CD4-positive, alpha-beta memory T cell (primary cell): ENCODE measurements at regions of chr11 and their contacts with region 1.

Region 1: DNA sequence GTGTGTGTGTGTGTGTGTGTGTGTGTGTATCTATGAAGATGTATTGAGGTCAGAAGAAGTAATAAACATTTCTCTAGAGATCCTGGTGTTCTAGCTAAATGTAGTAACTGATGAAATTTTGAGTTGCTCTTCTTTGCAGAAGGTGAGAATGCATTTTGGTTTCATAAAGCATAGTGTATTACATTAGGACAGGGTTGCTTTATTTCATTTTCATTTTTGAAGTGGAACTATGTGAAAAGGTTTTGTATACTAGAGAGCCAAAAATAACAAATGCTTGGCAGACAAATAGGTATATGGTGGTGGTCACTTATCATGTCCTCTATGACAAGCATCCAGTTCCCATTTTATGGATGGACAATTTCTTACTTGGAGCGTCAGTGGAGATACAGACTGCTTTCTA is 99.0 kb downstream of the CASP12 start:
- DNase-seq: peak in 3 of 5 donors; percentile 6 to 14 (median 9)
- H3K4me3 ChIP-seq: peak overlapping the region in 1 of 2 donors; percentile 16
- H3K4me3 Mint-ChIP-seq: peak overlapping the region; percentile 80 to 93 (median 84)
- H3K27ac ChIP-seq: no peak overlapping the region
- H3K27ac Mint-ChIP-seq: peak overlapping the region; percentile 71 to 92 (median 89)
- H3K4me1 ChIP-seq: peaks cover 29% of the 10 kb centered on the region
- H3K4me1 Mint-ChIP-seq: peaks cover 24 to 37% (median 33%) of the 10 kb centered on the region in 4 donors
- H3K27me3 ChIP-seq: no peaks in the 10 kb centered on the region
- H3K27me3 Mint-ChIP-seq: no peaks in the 10 kb centered on the region

Region 2: GRCh38 chr11:104678408-104678807 is 120.8 kb before region 1 on chr11:
- CTCF ChIA-PET with region 1: no interaction called
- POLR2A ChIA-PET with region 1: no interaction called
- intact Hi-C with region 1: no loop called
- DNase-seq: no peak
- H3K4me3 ChIP-seq: no peak overlapping the region
- H3K4me3 Mint-ChIP-seq: no peak overlapping the region
- H3K27ac ChIP-seq: no peak overlapping the region
- H3K27ac Mint-ChIP-seq: peak overlapping the region in 1 of 7 donors; percentile 15
- H3K4me1 ChIP-seq: no peaks in the 10 kb centered on the region
- H3K4me1 Mint-ChIP-seq: peaks cover 0 to 5% (median 4%) of the 10 kb centered on the region in 4 donors
- H3K27me3 ChIP-seq: no peaks in the 10 kb centered on the region
- H3K27me3 Mint-ChIP-seq: no peaks in the 10 kb centered on the region

Region 3: GRCh38 chr11:104817973-104818372 is 18.7 kb after region 1 on chr11:
- CTCF ChIA-PET with region 1: no interaction called
- POLR2A ChIA-PET with region 1: no interaction called
- intact Hi-C with region 1: loop called (anchors 2 kb)
- DNase-seq: no peak
- H3K4me3 ChIP-seq: no peak overlapping the region
- H3K4me3 Mint-ChIP-seq: no peak overlapping the region
- H3K27ac ChIP-seq: no peak overlapping the region
- H3K27ac Mint-ChIP-seq: no peak overlapping the region
- H3K4me1 ChIP-seq: no peaks in the 10 kb centered on the region
- H3K4me1 Mint-ChIP-seq: peaks cover 0 to 8% (median 3%) of the 10 kb centered on the region in 4 donors
- H3K27me3 ChIP-seq: no peaks in the 10 kb centered on the region
- H3K27me3 Mint-ChIP-seq: no peaks in the 10 kb centered on the region

Region 4: GRCh38 chr11:104830080-104830479 is 30.8 kb after region 1 on chr11:
- CTCF ChIA-PET with region 1: no interaction called
- POLR2A ChIA-PET with region 1: no interaction called
- intact Hi-C with region 1: no loop called
- DNase-seq: no peak
- H3K4me3 ChIP-seq: no peak overlapping the region
- H3K4me3 Mint-ChIP-seq: no peak overlapping the region
- H3K27ac ChIP-seq: no peak overlapping the region
- H3K27ac Mint-ChIP-seq: no peak overlapping the region
- H3K4me1 ChIP-seq: no peaks in the 10 kb centered on the region
- H3K4me1 Mint-ChIP-seq: peaks cover 0 to 3% (median 0%) of the 10 kb centered on the region in 4 donors
- H3K27me3 ChIP-seq: no peaks in the 10 kb centered on the region
- H3K27me3 Mint-ChIP-seq: no peaks in the 10 kb centered on the region

Region 5: GRCh38 chr11:104858882-104859775 is 59.9 kb after region 1 on chr11:
- CTCF ChIA-PET with region 1: no interaction called
- POLR2A ChIA-PET with region 1: no interaction called
- intact Hi-C with region 1: no loop called
- DNase-seq: peak in 4 of 5 donors; percentile 12 to 31 (median 22)
- H3K4me3 ChIP-seq: no peak overlapping the region
- H3K4me3 Mint-ChIP-seq: peak overlapping the region; percentile 1 to 79 (median 22)
- H3K27ac ChIP-seq: no peak overlapping the region
- H3K27ac Mint-ChIP-seq: peak overlapping the region; percentile 54 to 91 (median 81)
- H3K4me1 ChIP-seq: peaks cover 17% of the 10 kb centered on the region
- H3K4me1 Mint-ChIP-seq: peaks cover 15 to 25% (median 21%) of the 10 kb centered on the region in 4 donors
- H3K27me3 ChIP-seq: no peaks in the 10 kb centered on the region
- H3K27me3 Mint-ChIP-seq: no peaks in the 10 kb centered on the region